MCF 10A (cell line): ENCODE measurements at regions of chr1 and their contacts with region 1.

Region 1: DNA sequence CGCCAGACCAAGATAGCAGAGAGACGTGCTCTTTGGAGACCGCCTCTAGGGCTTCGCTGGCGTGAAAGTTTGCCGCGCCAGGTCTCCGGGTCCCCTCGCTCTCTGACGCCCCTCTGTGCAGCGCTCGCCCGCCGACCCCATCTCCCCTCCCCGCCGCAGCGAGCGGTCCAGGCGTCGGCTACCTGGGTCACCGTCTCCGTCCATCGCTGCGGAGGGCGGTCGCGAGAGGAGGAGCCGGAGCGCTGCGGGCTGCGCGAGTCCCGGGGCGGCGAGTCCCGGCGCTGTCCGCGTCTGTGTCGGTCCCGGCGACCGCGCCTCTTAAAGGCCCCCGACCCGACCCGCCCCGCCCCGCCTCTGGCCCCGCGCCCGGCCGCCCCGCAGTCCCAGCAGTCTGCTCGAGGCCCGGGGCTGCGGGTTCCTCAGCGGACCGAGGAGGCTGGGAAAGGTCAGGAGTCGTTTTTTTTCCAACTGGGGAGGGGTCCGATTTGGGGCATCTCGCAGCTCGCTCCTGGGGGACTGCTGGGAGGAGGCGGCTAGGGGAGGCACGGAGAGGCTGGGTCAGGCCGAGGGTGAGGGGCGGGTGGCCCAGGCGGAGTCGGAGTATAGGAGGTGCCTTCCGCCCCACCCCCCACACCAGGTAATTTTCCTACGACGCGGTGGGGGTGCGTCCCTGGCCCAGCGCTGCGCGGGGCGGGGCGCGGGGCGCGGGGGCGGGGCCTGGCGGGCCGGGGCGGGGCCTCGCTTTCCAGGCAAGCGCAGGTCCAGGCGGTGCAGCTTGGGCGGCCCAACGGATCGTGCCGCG is at the starts of genes FBXO2 and FBXO44:
- DNase-seq: peak; percentile 67
- H3K4me3 Mint-ChIP-seq: peak within 1 kb of the TSS; percentile 76
- H3K27ac Mint-ChIP-seq: peak within 1 kb of the TSS; percentile 66
- H3K4me1 Mint-ChIP-seq: no peaks in the 10 kb centered on the region
- H3K27me3 Mint-ChIP-seq: no peaks in the 10 kb centered on the region
- CTCF ChIP-seq: no peak
- total RNA-seq, gene FBXO2: 3.3 and 5.3 TPM in 2 replicates
- total RNA-seq, gene FBXO44: 16.0 and 16.3 TPM in 2 replicates

Region 2: DNA sequence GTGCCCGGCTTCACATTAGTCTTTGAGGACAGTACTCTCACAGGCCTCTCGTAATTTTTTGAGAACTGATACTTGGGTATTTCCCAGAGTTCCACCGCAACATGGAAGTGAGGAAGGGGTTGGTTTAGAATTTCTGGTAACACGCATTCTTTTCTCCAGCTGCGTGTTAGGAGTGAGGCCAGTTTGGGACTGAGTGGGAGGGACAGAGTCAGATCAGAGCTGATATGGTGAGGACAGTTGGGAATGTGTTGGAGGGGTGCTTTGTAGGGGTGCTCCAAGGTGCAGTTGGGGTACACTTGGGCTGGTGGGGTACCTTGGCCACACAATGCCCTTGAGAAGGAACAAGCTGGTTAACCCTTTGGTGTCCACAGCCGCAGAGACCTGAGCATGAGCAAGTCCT is 16.4 kb after region 1 on chr1:
- CTCF ChIA-PET with region 1: interaction called, 27 read pairs
- POLR2A ChIA-PET with region 1: interaction called, 3 read pairs
- intact Hi-C with region 1: no loop called
- DNase-seq: no peak
- H3K4me3 Mint-ChIP-seq: no peak overlapping the region
- H3K27ac Mint-ChIP-seq: no peak overlapping the region
- H3K4me1 Mint-ChIP-seq: no peaks in the 10 kb centered on the region
- H3K27me3 Mint-ChIP-seq: no peaks in the 10 kb centered on the region
- CTCF ChIP-seq: no peak

Region 3: GRCh38 chr1:11681071-11681771 is 26.9 kb after region 1 on chr1 and contains the start of gene MAD2L2:
- CTCF ChIA-PET with region 1: interaction called, 3 read pairs
- POLR2A ChIA-PET with region 1: interaction called, 11 read pairs
- intact Hi-C with region 1: no loop called
- DNase-seq: peak; percentile 81
- H3K4me3 Mint-ChIP-seq: peak within 1 kb of the TSS; percentile 88
- H3K27ac Mint-ChIP-seq: peak within 1 kb of the TSS; percentile 79
- H3K4me1 Mint-ChIP-seq: peaks cover 5% of the 10 kb centered on the region
- H3K27me3 Mint-ChIP-seq: no peaks in the 10 kb centered on the region
- CTCF ChIP-seq: no peak
- total RNA-seq, gene MAD2L2: 40.1 and 46.3 TPM in 2 replicates

Region 4: DNA sequence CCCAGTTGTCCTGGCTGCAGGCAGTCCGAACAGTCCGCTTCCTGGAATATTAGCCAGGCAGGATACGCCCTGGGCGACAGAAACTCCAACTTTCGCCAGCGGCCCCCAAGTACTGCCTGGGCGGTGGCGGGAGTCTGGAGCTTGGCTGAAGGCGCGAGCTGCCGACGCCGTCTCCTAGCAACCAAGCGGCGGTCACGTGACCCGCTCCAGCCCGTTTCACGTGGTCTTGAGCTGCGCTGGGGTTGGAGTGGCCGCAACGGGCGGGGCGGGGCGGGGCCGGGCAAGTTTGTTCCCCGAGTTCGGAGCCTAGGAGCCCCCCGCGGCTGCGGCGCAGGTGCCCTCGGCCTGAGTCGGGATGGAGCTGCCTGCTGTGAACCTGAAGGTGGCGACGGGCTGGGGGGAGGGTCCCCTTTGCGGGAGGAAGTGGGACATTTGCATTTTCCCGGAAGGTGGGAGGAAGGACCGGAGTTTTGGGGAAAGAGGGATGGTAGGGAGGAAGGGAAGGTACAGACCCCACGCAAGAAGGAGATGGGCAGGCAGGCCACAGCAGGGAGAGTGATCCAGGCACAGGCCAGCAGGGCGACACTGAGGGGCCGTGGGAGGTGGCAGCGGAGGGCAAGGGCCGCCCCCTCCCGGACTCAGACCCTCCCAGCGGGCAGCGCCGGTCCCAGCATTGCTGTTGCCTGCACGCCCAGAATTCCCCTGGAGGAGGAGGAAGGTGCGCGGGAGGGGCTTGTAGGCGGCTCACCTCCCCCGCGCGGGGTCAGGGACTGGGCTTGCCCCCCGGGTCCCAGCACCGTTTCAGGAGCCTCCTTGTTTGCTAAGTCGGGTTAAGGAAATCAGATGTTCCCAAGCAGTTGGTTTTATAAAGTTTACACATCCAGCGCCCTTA is 81.8 kb after region 1 on chr1 and contains the start of gene AGTRAP:
- CTCF ChIA-PET with region 1: no interaction called
- POLR2A ChIA-PET with region 1: interaction called, 19 read pairs
- intact Hi-C with region 1: no loop called
- DNase-seq: peak; percentile 89
- H3K4me3 Mint-ChIP-seq: peak within 1 kb of the TSS; percentile 97
- H3K27ac Mint-ChIP-seq: peak within 1 kb of the TSS; percentile 98
- H3K4me1 Mint-ChIP-seq: peaks cover 7% of the 10 kb centered on the region
- H3K27me3 Mint-ChIP-seq: no peaks in the 10 kb centered on the region
- CTCF ChIP-seq: no peak
- total RNA-seq, gene AGTRAP: 68.4 and 73.1 TPM in 2 replicates

Region 5: DNA sequence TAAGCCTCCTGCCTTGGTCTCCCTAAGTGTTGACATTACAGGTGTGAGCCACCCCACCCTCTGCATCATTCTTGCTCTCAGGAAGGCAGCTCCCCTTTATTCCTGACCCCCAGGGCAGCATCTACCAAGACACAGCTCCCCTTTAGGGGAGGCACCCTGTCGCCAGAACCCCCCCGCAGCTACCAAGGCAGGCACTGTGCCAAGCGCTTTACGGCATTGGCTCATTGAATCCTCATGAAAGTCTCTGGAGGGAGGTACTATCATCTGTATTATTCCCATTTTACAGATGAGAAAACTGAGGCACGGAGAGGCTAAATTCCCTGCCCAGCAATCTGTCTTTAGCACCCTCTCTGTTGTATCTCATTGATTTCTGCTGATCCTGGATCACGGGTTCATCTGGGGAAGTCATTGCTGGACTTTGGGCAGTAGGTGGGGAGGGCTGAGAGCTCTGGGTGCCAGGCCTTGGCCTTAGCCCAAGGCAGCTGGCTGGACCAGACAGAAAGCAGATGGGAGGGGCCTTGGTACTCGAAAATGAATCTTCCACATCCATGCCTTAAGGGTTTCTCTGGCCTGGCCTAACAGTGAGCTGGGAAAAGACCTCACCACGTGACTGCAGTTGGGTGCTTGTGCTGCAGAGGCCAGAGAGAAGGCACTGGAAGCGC is 286.1 kb after region 1 on chr1:
- CTCF ChIA-PET with region 1: no interaction called
- POLR2A ChIA-PET with region 1: no interaction called
- intact Hi-C with region 1: no loop called
- DNase-seq: peak; percentile 62
- H3K4me3 Mint-ChIP-seq: no peak overlapping the region
- H3K27ac Mint-ChIP-seq: no peak overlapping the region
- H3K4me1 Mint-ChIP-seq: peaks cover 12% of the 10 kb centered on the region
- H3K27me3 Mint-ChIP-seq: no peaks in the 10 kb centered on the region
- CTCF ChIP-seq: no peak